Calu3 (cell line): ENCODE measurements at regions of chr10 and their contacts with region 1.

Region 1: DNA sequence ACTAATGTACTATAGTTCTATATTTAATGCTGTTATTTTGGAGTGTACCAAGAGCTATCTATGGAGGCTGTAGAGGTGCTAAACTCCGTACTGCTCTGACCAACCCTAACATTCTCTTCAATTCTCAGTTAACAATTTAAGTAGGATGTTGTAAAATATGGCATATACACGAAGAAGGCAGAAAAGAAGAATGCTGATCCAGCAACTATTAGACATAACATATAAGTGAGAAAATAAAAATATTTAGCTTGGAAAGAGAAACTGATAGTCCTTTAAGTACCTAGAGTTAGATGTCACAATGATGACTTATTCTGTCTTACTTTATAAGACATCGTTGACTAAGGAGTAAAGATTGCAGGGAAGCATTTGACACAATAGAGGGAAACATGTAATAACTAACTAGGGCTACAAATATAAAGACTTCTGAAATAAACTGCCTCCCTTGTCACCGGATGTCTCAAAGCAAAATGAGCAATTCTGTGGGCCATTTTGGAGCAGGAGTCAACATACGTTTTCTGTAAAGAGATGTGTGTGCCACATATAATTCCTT is 159.5 kb downstream of the CPEB3 start:
- DNase-seq: no peak
- H3K4me3 Mint-ChIP-seq: no peak overlapping the region
- H3K27ac Mint-ChIP-seq: no peak overlapping the region
- H3K4me1 Mint-ChIP-seq: peaks cover 41% of the 10 kb centered on the region
- H3K27me3 Mint-ChIP-seq: no peaks in the 10 kb centered on the region
- CTCF ChIP-seq: no peak

Region 2: DNA sequence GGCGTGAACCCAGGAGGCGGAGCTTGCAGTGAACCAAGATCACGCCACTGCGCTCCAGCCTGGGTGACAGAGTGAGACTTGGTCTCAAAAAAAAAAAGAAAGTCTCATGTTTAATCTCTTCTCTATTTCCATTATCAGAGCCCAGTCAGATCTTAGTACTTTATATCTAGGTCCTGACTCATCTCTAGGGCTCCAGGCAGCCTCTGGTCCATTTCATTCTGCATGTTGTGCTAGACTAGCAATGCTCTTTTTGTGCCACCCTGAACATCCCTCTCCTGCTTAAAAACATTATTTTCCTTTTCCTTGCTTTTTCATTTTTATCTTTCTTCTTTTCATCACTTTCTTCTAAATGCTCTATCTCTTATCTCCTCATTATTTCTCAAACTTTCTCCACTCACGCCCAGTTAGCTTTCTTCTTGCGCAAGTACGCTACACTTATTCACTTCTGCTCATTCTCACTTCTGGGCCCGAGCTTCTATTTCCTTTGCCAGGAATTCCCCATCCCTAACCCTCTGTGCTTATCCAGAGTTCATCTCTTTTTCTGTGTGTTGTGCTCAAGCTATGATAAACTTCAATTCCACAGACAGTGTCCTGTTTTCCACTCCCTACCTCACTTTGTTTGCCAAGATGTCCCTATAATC is 143.8 kb before region 1 on chr10:
- CTCF ChIA-PET with region 1: no interaction called
- intact Hi-C with region 1: no loop called
- DNase-seq: no peak
- H3K4me3 Mint-ChIP-seq: no peak overlapping the region
- H3K27ac Mint-ChIP-seq: no peak overlapping the region
- H3K4me1 Mint-ChIP-seq: peaks cover 8% of the 10 kb centered on the region
- H3K27me3 Mint-ChIP-seq: no peaks in the 10 kb centered on the region
- CTCF ChIP-seq: no peak

Region 3: GRCh38 chr10:92142949-92143348 is 11.6 kb after region 1 on chr10:
- CTCF ChIA-PET with region 1: no interaction called
- intact Hi-C with region 1: loop called (anchors 1 kb)
- DNase-seq: no peak
- H3K4me3 Mint-ChIP-seq: no peak overlapping the region
- H3K27ac Mint-ChIP-seq: peak overlapping the region; percentile 27
- H3K4me1 Mint-ChIP-seq: peaks cover 7% of the 10 kb centered on the region
- H3K27me3 Mint-ChIP-seq: no peaks in the 10 kb centered on the region
- CTCF ChIP-seq: no peak